Right lobe of liver (tissue), 6 donors: ENCODE measurements at regions of chr3 and their contacts with region 1.

Region 1: GRCh38 chr3:47522082-47522987 is 8.8 kb upstream of the ELP6 start:
- DNase-seq: peak; percentile 80 to 83 (median 82)
- ATAC-seq: peak; percentile 99 to 100 (median 100)
- H3K4me3 ChIP-seq: no peak overlapping the region
- H3K27ac ChIP-seq: no peak overlapping the region
- H3K4me1 ChIP-seq: no peaks in the 10 kb centered on the region
- H3K27me3 ChIP-seq: no peaks in the 10 kb centered on the region
- CTCF ChIP-seq: peak; percentile 84 to 95 (median 90)
- POLR2A ChIP-seq: no peak

Region 2: DNA sequence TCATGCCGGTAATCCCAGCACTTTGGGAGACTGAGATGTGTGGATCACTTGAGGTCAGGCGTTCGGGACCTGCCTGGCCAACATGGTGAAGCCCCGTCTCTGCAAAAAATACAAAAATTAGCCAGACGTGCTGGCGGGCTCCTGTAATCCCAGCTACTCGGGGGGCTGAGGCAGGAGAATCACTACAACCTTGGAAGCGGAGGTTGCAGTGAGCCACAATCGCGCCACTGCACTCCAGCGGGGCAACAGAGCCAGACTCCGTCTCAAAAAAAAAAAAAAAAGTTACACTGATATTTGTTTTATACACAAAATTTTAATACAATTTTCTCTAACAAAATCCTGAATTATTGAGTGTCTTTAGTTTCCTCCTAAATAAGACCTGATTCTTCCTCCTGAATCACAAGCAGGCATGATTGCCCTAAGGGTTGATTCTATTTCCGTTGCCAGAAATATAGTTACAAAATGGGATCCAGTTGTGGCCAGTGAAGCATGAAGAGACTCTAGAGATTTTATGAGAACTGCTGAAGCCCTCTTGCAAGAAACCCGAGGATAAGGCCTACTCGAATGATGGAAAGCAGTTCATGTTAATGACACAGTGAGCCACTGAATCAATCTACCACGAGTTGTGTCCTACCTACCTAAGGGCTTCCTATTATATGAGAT is 269.0 kb after region 1 on chr3:
- intact Hi-C with region 1: loop called (anchors 5 to 10 kb)
- DNase-seq: peak in 1 of 3 donors; percentile 9
- ATAC-seq: no peak
- H3K4me3 ChIP-seq: no peak overlapping the region
- H3K27ac ChIP-seq: no peak overlapping the region
- H3K4me1 ChIP-seq: no peaks in the 10 kb centered on the region
- H3K27me3 ChIP-seq: no peaks in the 10 kb centered on the region
- CTCF ChIP-seq: no peak
- POLR2A ChIP-seq: no peak

Region 3: GRCh38 chr3:47799733-47800132 is 277.4 kb after region 1 on chr3:
- intact Hi-C with region 1: loop called (anchors 5 to 10 kb)
- DNase-seq: peak in 1 of 3 donors; percentile 23
- ATAC-seq: no peak
- H3K4me3 ChIP-seq: no peak overlapping the region
- H3K27ac ChIP-seq: no peak overlapping the region
- H3K4me1 ChIP-seq: peaks cover 0 to 8% (median 4%) of the 10 kb centered on the region in 4 donors
- H3K27me3 ChIP-seq: no peaks in the 10 kb centered on the region
- CTCF ChIP-seq: peak; percentile 9 to 41 (median 31)
- POLR2A ChIP-seq: no peak